T-cell (primary cell): ENCODE measurements at regions of chr6 and their contacts with region 1.

Region 1: GRCh38 chr6:139184047-139184446 is 49.2 kb downstream of the HECA start:
- DNase-seq: no peak
- ATAC-seq: peak in 2 of 4 experiments; percentile 11 to 20
- H3K4me3 ChIP-seq: no peak overlapping the region
- H3K4me3 Mint-ChIP-seq: no peak overlapping the region
- H3K27ac ChIP-seq: peak overlapping the region; percentile 8
- H3K27ac Mint-ChIP-seq: peak overlapping the region; percentile 62 to 67
- H3K4me1 ChIP-seq: no peaks in the 10 kb centered on the region
- H3K4me1 Mint-ChIP-seq: peaks cover 51 to 76% (median 71%) of the 10 kb centered on the region in 3 donors
- H3K27me3 ChIP-seq: no peaks in the 10 kb centered on the region
- H3K27me3 Mint-ChIP-seq: no peaks in the 10 kb centered on the region

Region 2: GRCh38 chr6:139278190-139278589 is 94.1 kb after region 1 on chr6:
- CTCF ChIA-PET with region 1: interaction called in 1 of 2 experiments, 3 read pairs
- POLR2A ChIA-PET with region 1: interaction called in 1 of 2 experiments, 10 read pairs
- DNase-seq: no peak
- ATAC-seq: no peak
- H3K4me3 ChIP-seq: no peak overlapping the region
- H3K4me3 Mint-ChIP-seq: no peak overlapping the region
- H3K27ac ChIP-seq: no peak overlapping the region
- H3K27ac Mint-ChIP-seq: peak overlapping the region; percentile 64 to 82
- H3K4me1 ChIP-seq: peaks cover 7 to 10% of the 10 kb centered on the region in 2 experiments
- H3K4me1 Mint-ChIP-seq: peaks cover 27 to 34% (median 28%) of the 10 kb centered on the region in 3 donors
- H3K27me3 ChIP-seq: no peaks in the 10 kb centered on the region
- H3K27me3 Mint-ChIP-seq: no peaks in the 10 kb centered on the region